ENCODE measurements at regions of chr22 and their contacts with region 1.

Region 1: DNA sequence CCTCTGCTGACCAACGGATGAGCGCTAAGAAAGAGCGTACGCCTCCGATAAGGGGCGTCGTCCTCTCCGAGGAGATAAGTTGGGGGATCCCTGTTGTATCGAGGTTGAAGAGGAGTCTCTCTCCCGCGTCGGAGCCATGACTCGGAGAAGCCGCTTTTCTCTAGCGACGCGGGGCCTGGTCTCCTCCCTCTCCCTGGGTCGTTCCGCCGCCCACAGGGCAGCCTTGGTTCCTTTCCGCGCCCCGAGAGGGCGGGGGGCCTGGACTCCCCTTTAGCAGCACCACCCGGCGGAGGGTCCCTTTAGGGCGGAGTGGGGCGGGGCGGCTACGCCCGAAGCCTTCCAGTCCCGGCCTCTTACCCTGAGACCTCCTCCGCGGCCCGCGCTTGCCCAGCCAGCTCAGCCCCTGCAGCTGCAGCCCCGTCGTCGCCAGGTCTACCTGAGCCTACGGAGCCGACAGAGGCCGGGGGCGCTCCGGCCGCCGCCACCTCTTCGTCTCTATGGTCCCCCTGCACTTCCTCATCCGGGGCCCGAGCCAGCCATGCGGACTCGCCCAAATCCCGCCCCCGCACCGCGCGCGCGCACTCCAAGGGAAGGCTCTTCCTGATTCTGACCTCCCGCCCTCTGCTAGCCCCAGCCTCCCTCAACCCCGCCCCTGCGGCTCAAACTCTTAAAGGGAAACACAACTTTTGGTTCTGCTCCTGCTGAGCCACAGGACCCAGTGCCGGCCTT is at the start of gene PRR14L:
- DNase-seq: peak; percentile 100
- total RNA-seq, gene PRR14L: 16.1 TPM

Region 2: DNA sequence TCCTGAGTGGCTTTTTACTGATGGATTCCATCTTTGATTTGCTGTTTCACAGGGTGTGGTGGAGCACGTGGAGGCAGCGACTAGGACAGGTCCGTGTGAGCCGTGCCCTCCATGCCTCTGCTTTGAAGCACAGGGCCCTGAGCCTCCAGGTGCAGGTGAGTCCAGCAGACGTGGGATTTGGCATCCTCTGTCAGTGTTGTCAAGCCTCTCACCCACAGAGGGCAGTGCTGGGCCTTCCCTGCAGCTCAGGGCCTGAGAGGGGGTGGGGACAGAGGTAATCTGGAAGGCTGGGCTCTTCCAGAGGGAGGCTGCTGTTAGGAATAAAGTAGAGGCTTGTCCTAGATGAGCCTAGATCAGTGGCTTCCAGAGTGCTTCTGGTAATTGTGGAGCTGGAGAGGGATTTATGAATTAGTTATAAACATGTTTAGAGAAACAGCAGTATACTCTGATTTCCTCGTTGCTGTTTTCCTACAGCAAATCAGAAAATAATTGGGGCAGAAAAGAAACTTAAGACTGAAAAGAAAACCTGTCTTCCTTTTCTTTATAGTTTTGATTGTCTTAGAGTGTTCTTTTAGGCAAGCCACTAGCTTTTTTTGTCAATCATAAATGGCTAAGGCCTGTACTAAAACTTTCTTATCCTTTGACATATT is 188.4 kb before region 1 on chr22:
- intact Hi-C with region 1: no loop called
- DNase-seq: peak; percentile 75

Region 3: DNA sequence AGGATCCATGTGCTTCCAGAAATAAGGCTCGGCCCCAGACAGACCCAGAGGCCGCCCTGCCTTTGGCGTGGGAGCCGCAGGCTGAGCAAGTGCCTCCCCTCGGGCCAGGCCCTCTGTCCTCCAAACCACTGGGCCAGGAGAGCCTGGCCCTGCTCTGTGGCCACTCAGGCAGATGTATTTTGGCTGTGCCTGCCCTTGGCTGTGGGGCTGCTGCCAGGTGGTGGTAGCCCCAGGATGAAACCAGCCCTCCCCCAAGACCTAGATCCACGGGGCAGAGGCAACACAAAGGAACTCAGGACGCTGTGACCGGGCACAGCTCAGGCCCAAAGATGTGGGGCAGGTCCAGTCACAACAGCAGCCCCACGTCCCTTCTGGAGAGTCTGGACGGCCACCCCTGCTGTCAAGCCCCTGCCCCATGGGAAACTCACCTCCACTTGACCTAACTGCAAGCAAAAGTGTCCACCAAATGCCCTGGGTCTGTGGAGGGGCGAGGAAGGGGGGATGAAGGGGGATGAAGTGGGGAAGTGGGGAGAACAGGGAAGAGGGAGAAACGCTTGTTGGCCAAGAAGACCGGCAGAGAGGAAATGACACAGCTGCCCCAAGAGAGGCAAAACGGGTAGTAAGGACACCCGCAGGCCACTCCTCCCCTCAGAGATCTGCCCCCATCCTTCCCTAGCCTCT is 111.7 kb before region 1 on chr22:
- intact Hi-C with region 1: no loop called
- DNase-seq: peak; percentile 90

Region 4: DNA sequence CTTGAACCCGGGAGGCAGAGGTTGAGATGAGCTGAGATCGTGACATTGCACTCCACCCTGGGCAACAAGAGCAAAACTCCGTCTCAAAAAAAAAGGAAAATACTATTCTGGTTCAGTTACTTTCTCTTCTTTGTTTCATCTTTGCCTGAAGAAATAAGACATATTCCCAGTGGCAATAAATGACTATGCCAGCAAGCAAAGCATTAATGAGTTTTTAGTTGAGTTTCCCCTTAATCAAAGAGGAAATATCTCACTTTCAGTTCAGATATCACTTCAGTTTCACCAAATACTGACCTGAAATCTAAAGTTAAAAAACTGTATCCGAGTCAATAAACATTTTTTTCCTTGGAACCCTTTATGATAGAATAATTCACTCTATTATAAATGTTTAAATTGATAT is 98.1 kb before region 1 on chr22:
- intact Hi-C with region 1: no loop called
- DNase-seq: no peak

Region 5: GRCh38 chr22:31661851-31662656 is 87.7 kb before region 1 on chr22 and contains the start of gene PISD:
- intact Hi-C with region 1: loop called (anchors 5 kb)
- DNase-seq: peak; percentile 98
- total RNA-seq, gene PISD: 20.2 TPM

Region 6: GRCh38 chr22:31680861-31681341 is 68.9 kb before region 1 on chr22:
- intact Hi-C with region 1: loop called (anchors 5 kb)
- DNase-seq: no peak

Region 7: GRCh38 chr22:31943976-31944699 is 194.3 kb after region 1 on chr22 and contains the start of gene YWHAH:
- intact Hi-C with region 1: loop called (anchors 1 kb)
- DNase-seq: peak; percentile 98
- total RNA-seq, gene YWHAH: 116 TPM

Region 8: GRCh38 chr22:32411829-32412592 is 662.2 kb after region 1 on chr22 and contains the start of gene RTCB:
- intact Hi-C with region 1: loop called (anchors 5 kb)
- DNase-seq: peak; percentile 94
- total RNA-seq, gene RTCB: 42.0 TPM